Activated naive CD4-positive, alpha-beta T cell treated with anti-CD3 and anti-CD28 coated beads for 36 hours (primary cell): ENCODE measurements at regions of chr7 and their contacts with region 1.

Region 1: DNA sequence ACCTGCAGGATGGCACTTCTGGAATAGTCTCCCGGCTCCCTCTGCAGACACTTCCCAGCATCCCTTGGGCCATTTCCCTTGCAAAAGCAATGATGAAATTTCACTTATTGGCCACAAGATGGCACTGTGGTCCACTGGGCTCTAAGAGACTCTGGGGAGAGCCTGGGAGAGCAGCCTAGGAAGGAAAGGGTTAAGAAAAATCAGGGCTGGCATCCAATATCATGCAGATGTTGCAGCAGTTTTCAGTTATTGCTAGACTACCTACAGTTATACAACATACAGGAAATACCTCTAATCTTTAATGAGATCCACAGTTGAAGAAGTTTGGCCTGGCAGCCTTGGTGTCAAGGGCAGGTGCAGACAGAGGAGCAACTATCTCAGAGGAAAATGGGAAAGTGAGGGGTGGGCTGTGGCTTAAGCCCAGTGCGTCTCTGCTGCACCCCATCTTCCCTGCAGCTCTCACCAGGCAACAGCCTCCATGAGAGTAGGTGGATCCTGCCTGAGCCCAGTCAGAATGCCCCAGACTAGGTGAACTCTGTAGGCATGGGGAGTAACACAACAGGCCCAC is 100.2 kb upstream of the PRSS58 start:
- DNase-seq: peak; percentile 59
- H3K4me3 Mint-ChIP-seq: peak overlapping the region; percentile 29
- H3K27ac Mint-ChIP-seq: no peak overlapping the region
- H3K4me1 Mint-ChIP-seq: peaks cover 38% of the 10 kb centered on the region
- H3K27me3 Mint-ChIP-seq: no peaks in the 10 kb centered on the region

Region 2: GRCh38 chr7:142345811-142346210 is 12.2 kb before region 1 on chr7:
- CTCF ChIA-PET with region 1: interaction called, 16 read pairs
- intact Hi-C with region 1: no loop called
- DNase-seq: peak; percentile 73
- H3K4me3 Mint-ChIP-seq: peak overlapping the region; percentile 41
- H3K27ac Mint-ChIP-seq: peak overlapping the region; percentile 59
- H3K4me1 Mint-ChIP-seq: peaks cover 21% of the 10 kb centered on the region
- H3K27me3 Mint-ChIP-seq: peaks cover 2% of the 10 kb centered on the region

Region 3: DNA sequence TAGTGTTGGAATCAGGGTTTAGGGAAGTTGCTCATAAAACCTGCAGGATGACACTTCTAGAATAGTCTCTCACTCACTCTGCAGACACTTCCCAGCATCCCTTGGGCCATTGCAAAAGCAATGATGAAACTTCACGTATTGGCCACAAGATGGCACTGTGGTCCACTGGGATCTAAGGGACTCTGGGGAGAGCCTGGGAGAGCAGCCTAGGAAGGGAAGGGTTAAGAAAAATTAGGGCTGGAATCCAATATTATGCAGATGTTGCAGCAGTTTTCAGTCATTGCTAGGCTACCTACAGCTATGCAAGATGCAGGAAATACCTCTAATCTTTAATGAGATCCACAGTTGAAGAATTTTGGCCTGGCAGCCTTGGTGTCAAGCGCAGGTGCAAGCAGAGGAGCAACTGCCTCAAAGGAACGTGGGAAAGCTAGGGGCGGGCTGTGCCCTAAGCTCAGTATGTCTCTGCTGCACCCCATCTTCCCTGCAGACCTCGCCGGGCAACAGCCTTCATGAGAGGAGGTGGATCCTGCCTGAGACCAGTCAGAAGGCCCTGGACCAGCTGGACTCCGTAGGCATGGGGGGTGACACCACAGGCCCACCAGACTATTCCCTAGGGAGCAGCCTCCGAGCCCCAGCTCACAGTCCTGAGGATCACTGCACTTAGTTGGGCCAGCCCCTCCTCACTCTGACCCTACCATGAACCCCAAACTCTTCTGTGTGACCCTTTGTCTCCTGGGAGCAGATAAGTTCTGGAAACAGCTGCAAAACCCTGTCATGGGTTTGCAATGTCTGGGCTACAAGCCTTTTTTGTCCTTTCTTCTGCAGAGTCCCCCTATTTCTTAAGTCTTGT is 27.7 kb after region 1 on chr7:
- CTCF ChIA-PET with region 1: interaction called, 12 read pairs
- intact Hi-C with region 1: loop called (anchors 1 kb)
- DNase-seq: peak; percentile 76
- H3K4me3 Mint-ChIP-seq: peak overlapping the region; percentile 32
- H3K27ac Mint-ChIP-seq: peak overlapping the region; percentile 84
- H3K4me1 Mint-ChIP-seq: peaks cover 26% of the 10 kb centered on the region
- H3K27me3 Mint-ChIP-seq: no peaks in the 10 kb centered on the region

Region 4: DNA sequence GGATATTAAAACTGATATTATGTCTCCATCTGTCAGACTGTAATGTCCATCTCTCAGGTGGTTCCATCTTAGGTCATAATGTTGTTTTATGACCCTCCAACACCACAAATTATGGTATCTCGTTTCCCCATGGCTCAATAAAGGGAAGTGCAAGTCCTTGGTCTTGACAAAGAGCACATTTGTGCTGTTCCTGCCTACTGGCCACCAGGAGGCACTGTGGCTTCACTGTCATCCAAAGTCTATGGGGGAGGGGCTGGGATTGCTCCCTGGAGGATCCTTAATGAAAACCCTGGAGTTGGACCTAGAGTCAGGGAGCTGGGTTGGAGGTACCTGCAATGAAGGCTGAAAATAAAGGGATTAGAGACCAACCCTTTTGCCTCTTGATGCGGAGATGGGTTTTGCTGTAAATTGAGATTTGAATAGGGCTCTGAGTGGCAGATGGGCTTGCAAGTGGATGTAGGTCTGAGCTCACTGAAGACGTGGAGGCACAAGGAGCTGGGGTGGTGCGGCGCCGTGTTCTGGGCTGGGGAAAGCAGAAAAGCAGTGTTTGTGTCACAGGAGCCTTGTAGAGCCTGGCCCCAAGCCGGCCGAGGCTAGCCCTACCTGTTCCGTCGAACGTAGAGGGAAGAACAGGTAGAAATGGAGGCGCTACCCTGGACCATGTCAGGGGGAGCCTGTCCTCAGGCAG is 80.3 kb after region 1 on chr7:
- CTCF ChIA-PET with region 1: interaction called, 6 read pairs
- intact Hi-C with region 1: loop called (anchors 5 kb)
- DNase-seq: peak; percentile 47
- H3K4me3 Mint-ChIP-seq: no peak overlapping the region
- H3K27ac Mint-ChIP-seq: no peak overlapping the region
- H3K4me1 Mint-ChIP-seq: peaks cover 56% of the 10 kb centered on the region
- H3K27me3 Mint-ChIP-seq: no peaks in the 10 kb centered on the region

Region 5: GRCh38 chr7:143002106-143002505 is 644.1 kb after region 1 on chr7:
- CTCF ChIA-PET with region 1: interaction called, 12 read pairs
- intact Hi-C with region 1: no loop called
- DNase-seq: no peak
- H3K4me3 Mint-ChIP-seq: no peak overlapping the region
- H3K27ac Mint-ChIP-seq: no peak overlapping the region
- H3K4me1 Mint-ChIP-seq: peaks cover 5% of the 10 kb centered on the region
- H3K27me3 Mint-ChIP-seq: no peaks in the 10 kb centered on the region